Activated CD8-positive, alpha-beta T cell treated with anti-CD3 and anti-CD28 coated beads for 36 hours (primary cell): ENCODE measurements at regions of chr12 and their contacts with region 1.

Region 1: GRCh38 chr12:69070319-69071090 is 137.5 kb upstream of the CPM start:
- DNase-seq: peak; percentile 85
- ATAC-seq: peak; percentile 79
- H3K4me3 Mint-ChIP-seq: no peak overlapping the region
- H3K27ac Mint-ChIP-seq: no peak overlapping the region
- H3K4me1 Mint-ChIP-seq: peaks cover 15% of the 10 kb centered on the region
- H3K27me3 Mint-ChIP-seq: peaks cover 16% of the 10 kb centered on the region
- CTCF ChIP-seq: peak; percentile 83

Region 2: GRCh38 chr12:68866950-68867349 is 203.6 kb before region 1 on chr12:
- CTCF ChIA-PET with region 1: interaction called, 24 read pairs
- POLR2A ChIA-PET with region 1: no interaction called
- intact Hi-C with region 1: loop called (anchors 1 kb)
- DNase-seq: no peak
- ATAC-seq: no peak
- H3K4me3 Mint-ChIP-seq: no peak overlapping the region
- H3K27ac Mint-ChIP-seq: no peak overlapping the region
- H3K4me1 Mint-ChIP-seq: no peaks in the 10 kb centered on the region
- H3K27me3 Mint-ChIP-seq: no peaks in the 10 kb centered on the region
- CTCF ChIP-seq: no peak

Region 3: GRCh38 chr12:69179786-69180185 is 109.3 kb after region 1 on chr12:
- CTCF ChIA-PET with region 1: no interaction called
- POLR2A ChIA-PET with region 1: no interaction called
- intact Hi-C with region 1: no loop called
- DNase-seq: no peak
- ATAC-seq: no peak
- H3K4me3 Mint-ChIP-seq: no peak overlapping the region
- H3K27ac Mint-ChIP-seq: no peak overlapping the region
- H3K4me1 Mint-ChIP-seq: no peaks in the 10 kb centered on the region
- H3K27me3 Mint-ChIP-seq: peaks cover 1% of the 10 kb centered on the region
- CTCF ChIP-seq: no peak